Activated CD8-positive, alpha-beta T cell treated with anti-CD3 and anti-CD28 coated beads for 36 hours (primary cell): ENCODE measurements at regions of chr6 and their contacts with region 1.

Region 1: GRCh38 chr6:11188161-11188915 is 44.1 kb downstream of the NEDD9 start:
- DNase-seq: no peak
- ATAC-seq: no peak
- H3K4me3 Mint-ChIP-seq: no peak overlapping the region
- H3K27ac Mint-ChIP-seq: peak overlapping the region; percentile 8
- H3K4me1 Mint-ChIP-seq: peaks cover 4% of the 10 kb centered on the region
- H3K27me3 Mint-ChIP-seq: no peaks in the 10 kb centered on the region
- CTCF ChIP-seq: no peak

Region 2: GRCh38 chr6:11198663-11199603 is 10.6 kb after region 1 on chr6:
- CTCF ChIA-PET with region 1: interaction called, 10 read pairs
- POLR2A ChIA-PET with region 1: interaction called, 6 read pairs
- intact Hi-C with region 1: no loop called
- DNase-seq: peak; percentile 58
- ATAC-seq: peak; percentile 70
- H3K4me3 Mint-ChIP-seq: no peak overlapping the region
- H3K27ac Mint-ChIP-seq: peak overlapping the region; percentile 84
- H3K4me1 Mint-ChIP-seq: peaks cover 58% of the 10 kb centered on the region
- H3K27me3 Mint-ChIP-seq: no peaks in the 10 kb centered on the region
- CTCF ChIP-seq: no peak

Region 3: DNA sequence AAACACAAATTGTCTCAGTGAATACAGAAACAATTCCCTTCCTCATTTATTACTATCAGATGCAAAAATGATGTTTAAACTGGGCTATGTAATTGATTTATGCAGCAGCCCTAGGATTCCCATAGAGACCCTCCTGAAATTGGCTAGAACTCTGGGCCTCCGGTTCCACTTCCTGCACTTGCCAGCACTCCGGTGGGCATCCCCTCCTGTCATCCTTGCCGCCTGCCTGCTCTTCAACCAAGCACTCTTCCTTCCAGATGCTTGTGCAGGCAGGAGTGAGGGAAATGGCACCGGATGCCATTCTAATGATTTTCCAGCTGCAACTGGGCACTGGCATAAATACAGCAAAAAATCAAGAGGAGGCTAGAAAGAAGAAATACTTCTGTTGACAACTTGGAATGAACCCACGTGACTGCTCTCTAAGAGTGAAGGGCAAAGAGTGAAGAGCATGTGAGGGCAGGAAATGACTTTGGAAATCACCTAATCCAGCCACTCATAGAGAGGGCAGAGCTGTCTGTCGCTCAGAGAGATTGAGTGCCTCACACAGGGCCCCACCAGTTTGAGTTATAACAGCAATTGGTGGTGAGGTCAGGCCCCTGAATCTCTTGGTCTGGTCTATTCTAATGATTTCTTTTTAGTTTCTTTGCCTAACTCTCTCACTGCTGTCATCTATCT is 47.9 kb after region 1 on chr6:
- CTCF ChIA-PET with region 1: no interaction called
- POLR2A ChIA-PET with region 1: no interaction called
- intact Hi-C with region 1: no loop called
- DNase-seq: peak; percentile 74
- ATAC-seq: peak; percentile 50
- H3K4me3 Mint-ChIP-seq: no peak overlapping the region
- H3K27ac Mint-ChIP-seq: peak overlapping the region; percentile 79
- H3K4me1 Mint-ChIP-seq: peaks cover 45% of the 10 kb centered on the region
- H3K27me3 Mint-ChIP-seq: no peaks in the 10 kb centered on the region
- CTCF ChIP-seq: no peak